IMR-90 (cell line): ENCODE measurements at regions of chr6 and their contacts with region 1.

Region 1: DNA sequence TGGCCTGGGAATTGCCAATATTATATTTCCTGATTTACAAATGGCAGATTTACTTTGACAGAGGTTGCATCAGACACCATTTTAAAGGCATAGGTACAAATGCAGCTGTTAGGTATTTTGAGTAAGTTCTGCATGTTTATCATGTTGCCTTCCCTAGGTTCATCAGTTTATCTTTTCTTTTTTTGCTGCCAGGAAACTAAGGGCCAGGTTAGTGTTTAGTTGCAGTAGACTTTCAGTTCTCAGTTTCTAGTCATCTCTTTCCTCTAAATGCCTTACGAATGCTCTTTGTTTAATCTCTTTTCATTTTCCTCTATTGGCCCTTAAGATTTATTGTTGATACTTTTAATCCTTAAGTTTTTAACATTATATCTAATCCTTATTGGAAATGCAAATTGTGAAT is 129.9 kb downstream of the SMAP1 start:
- DNase-seq: no peak
- ATAC-seq: no peak
- H3K4me3 ChIP-seq: no peak overlapping the region
- H3K27ac ChIP-seq: no peak overlapping the region
- H3K4me1 ChIP-seq: no peaks in the 10 kb centered on the region
- H3K27me3 ChIP-seq: no peaks in the 10 kb centered on the region
- CTCF ChIP-seq: no peak
- POLR2A ChIP-seq: no peak
- RAD21 ChIP-seq: no peak

Region 2: DNA sequence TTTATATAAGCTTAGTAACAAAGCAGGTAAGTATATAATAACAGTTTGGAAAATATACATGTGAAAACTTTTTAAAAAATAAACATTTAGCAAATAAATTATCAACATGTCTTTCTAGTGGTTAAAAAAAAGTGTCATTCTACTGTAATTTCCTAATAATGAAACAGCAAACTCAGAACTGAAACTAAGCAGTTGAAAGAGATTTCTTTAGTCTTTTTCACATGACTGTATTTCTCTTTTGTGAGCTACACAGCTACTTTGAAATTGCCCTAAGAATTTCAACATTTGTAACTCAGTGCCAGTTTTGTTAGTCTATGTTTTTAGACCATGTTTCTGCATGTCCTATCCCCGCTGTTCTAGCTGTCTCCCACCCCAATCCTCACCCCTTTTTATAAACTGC is 259.2 kb before region 1 on chr6:
- CTCF ChIA-PET with region 1: no interaction called
- POLR2A ChIA-PET with region 1: no interaction called
- dilution Hi-C with region 1: no loop called
- in situ Hi-C with region 1: no loop called
- intact Hi-C with region 1: loop called (anchors 10 kb)
- DNase-seq: no peak
- ATAC-seq: no peak
- H3K4me3 ChIP-seq: no peak overlapping the region
- H3K27ac ChIP-seq: no peak overlapping the region
- H3K4me1 ChIP-seq: no peaks in the 10 kb centered on the region
- H3K27me3 ChIP-seq: no peaks in the 10 kb centered on the region
- CTCF ChIP-seq: no peak
- POLR2A ChIP-seq: no peak
- RAD21 ChIP-seq: no peak

Region 3: DNA sequence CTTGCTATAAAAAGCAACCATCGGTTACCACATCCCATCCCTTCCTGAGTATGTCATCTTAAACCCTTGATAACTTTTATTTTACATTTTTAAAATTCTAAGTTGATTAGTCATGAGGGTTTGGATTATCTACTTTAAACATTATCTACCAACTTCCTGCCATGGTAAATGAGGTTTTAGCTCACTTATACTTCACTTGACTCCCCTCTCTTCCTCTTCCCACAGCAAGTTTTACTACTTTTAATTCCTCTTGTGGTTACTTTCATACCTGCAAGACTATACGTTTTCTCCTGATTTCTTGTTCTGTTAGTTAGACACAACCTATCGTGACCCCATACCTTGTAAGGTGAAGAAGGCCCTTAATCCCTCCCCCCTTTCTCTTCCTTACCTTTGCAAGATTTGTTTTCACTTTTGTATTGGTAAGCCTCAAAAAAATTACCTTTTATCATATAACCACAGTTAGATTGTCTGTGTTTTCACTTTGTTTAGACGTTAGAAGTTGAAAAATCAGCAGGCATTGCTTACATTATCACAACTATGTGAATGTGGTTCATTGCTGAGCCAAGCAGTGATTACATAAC is 430.9 kb after region 1 on chr6:
- CTCF ChIA-PET with region 1: no interaction called
- POLR2A ChIA-PET with region 1: no interaction called
- dilution Hi-C with region 1: no loop called
- in situ Hi-C with region 1: no loop called
- intact Hi-C with region 1: no loop called
- DNase-seq: peak; percentile 66
- ATAC-seq: peak; percentile 84
- H3K4me3 ChIP-seq: no peak overlapping the region
- H3K27ac ChIP-seq: no peak overlapping the region
- H3K4me1 ChIP-seq: peaks cover 4% of the 10 kb centered on the region
- H3K27me3 ChIP-seq: no peaks in the 10 kb centered on the region
- CTCF ChIP-seq: no peak
- POLR2A ChIP-seq: no peak
- RAD21 ChIP-seq: no peak